GM12878 (cell line): ENCODE measurements at regions of chr10 and their contacts with region 1.

Region 1: GRCh38 chr10:69123747-69124562 is at the start of gene VPS26A:
- DNase-seq: peak; percentile 87
- ATAC-seq: peak; percentile 93
- H3K4me3 ChIP-seq: peak within 1 kb of the TSS; percentile 88
- H3K27ac ChIP-seq: peak within 1 kb of the TSS; percentile 86
- H3K4me1 ChIP-seq: peaks cover 4% of the 10 kb centered on the region; the same call in 1 of the 2 replicates
- H3K27me3 ChIP-seq: no peaks in the 10 kb centered on the region
- CTCF ChIP-seq: peak; percentile 58 to 78 (median 60); a peak in 5 of 6 replicates
- EP300 ChIP-seq: no peak
- POLR2A ChIP-seq: peak; percentile 88
- RAD21 ChIP-seq: 0 out of 2 replicates have a peak, but pooled peaks have one; percentile 3
- polyA plus RNA-seq, gene VPS26A: 21.3 to 30.9 TPM

Region 2: DNA sequence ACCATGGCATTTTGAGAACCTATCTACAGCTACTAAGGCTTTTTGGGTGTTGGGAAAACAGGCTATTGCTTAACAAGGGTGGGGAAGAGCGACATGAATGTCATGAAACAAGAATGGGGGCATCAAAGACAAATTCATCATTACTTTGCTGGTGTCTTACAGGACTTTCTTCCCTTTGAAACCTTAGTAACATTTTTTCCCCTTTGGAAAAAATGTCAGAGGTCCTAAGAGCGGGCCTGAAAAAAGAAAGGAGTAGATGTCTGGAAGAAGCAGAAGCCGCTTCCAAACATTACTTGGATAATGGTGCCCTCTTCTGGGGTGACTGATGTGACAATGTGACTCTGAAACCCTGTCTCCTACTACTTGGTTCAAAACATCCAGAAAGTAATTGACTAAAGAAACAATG is 226.6 kb before region 1 on chr10:
- CTCF ChIA-PET with region 1: no interaction called
- POLR2A ChIA-PET with region 1: no interaction called
- RAD21 ChIA-PET with region 1: no interaction called
- SMC1A ChIA-PET with region 1: no interaction called
- in situ Hi-C with region 1: no loop called
- intact Hi-C with region 1: no loop called
- DNase-seq: no peak
- ATAC-seq: no peak
- H3K4me3 ChIP-seq: no peak overlapping the region
- H3K27ac ChIP-seq: no peak overlapping the region
- H3K4me1 ChIP-seq: no peaks in the 10 kb centered on the region; the same call in 1 of the 2 replicates
- H3K27me3 ChIP-seq: no peaks in the 10 kb centered on the region; a peak in 1 of 4 replicates
- CTCF ChIP-seq: peak; percentile 18 to 51 (median 40); a peak in 4 of 6 replicates
- EP300 ChIP-seq: no peak
- POLR2A ChIP-seq: no peak
- RAD21 ChIP-seq: peak; percentile 76

Region 3: GRCh38 chr10:69222157-69223027 is 98.4 kb after region 1 on chr10:
- CTCF ChIA-PET with region 1: no interaction called
- POLR2A ChIA-PET with region 1: no interaction called
- RAD21 ChIA-PET with region 1: interaction called, 3 read pairs
- SMC1A ChIA-PET with region 1: no interaction called
- in situ Hi-C with region 1: no loop called
- intact Hi-C with region 1: loop called (anchors 10 kb)
- DNase-seq: peak; percentile 88
- ATAC-seq: peak; percentile 97
- H3K4me3 ChIP-seq: peak overlapping the region; percentile 63
- H3K27ac ChIP-seq: peak overlapping the region; percentile 80
- H3K4me1 ChIP-seq: peaks cover 25% of the 10 kb centered on the region
- H3K27me3 ChIP-seq: no peaks in the 10 kb centered on the region
- CTCF ChIP-seq: peak; percentile 71 to 82 (median 77)
- EP300 ChIP-seq: peak; percentile 83 to 86
- POLR2A ChIP-seq: peak; percentile 69
- RAD21 ChIP-seq: peak; percentile 62

Region 4: GRCh38 chr10:69327463-69328379 is 203.8 kb after region 1 on chr10:
- CTCF ChIA-PET with region 1: no interaction called
- POLR2A ChIA-PET with region 1: interaction called, 12 read pairs
- RAD21 ChIA-PET with region 1: interaction called, 4 read pairs
- SMC1A ChIA-PET with region 1: no interaction called
- in situ Hi-C with region 1: no loop called
- intact Hi-C with region 1: no loop called
- DNase-seq: no peak
- ATAC-seq: peak; percentile 96
- H3K4me3 ChIP-seq: peak overlapping the region; percentile 62
- H3K27ac ChIP-seq: peak overlapping the region; percentile 77
- H3K4me1 ChIP-seq: peaks cover 14% of the 10 kb centered on the region
- H3K27me3 ChIP-seq: no peaks in the 10 kb centered on the region
- CTCF ChIP-seq: no peak
- EP300 ChIP-seq: no peak
- POLR2A ChIP-seq: peak; percentile 73
- RAD21 ChIP-seq: no peak

Region 5: GRCh38 chr10:69348816-69349541 is 225.0 kb after region 1 on chr10:
- CTCF ChIA-PET with region 1: no interaction called
- POLR2A ChIA-PET with region 1: no interaction called
- RAD21 ChIA-PET with region 1: no interaction called
- SMC1A ChIA-PET with region 1: no interaction called
- in situ Hi-C with region 1: no loop called
- intact Hi-C with region 1: no loop called
- DNase-seq: no peak
- ATAC-seq: no peak
- H3K4me3 ChIP-seq: no peak overlapping the region
- H3K27ac ChIP-seq: no peak overlapping the region
- H3K4me1 ChIP-seq: peaks cover 18% of the 10 kb centered on the region
- H3K27me3 ChIP-seq: no peaks in the 10 kb centered on the region
- CTCF ChIP-seq: no peak
- EP300 ChIP-seq: no peak
- POLR2A ChIP-seq: no peak
- RAD21 ChIP-seq: no peak

Region 6: DNA sequence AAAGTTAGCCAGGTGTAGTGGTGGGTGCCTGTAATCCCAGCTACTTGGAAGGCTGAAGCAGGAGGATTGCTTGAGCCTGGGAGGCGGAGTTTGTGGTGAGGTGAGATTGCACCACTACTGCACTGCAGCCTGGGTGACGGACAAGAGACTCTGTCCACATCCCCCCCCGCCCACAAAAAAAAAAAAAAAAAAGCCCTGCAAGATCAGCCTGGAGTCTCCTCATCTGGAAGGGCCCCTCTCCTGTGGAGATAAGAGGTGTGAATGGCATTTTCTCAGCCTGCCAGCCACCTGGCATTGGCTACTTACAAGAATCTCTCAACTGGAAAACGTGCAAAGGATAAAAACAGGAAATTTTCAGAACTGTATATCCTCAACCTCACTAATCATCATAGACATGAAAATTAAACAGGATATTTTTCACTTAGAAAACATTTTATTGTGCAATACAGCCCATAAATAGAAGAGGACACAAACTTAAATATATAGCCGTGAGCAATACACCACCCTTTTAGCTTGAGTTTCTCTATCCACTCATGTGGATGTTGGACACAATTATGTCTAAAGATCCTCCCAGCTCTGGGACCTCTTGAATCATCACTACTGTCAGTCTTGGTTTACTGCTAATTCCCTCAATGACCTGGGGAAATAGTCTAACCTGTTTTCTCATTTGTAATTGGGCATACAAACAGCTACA is 316.0 kb after region 1 on chr10:
- CTCF ChIA-PET with region 1: no interaction called
- POLR2A ChIA-PET with region 1: no interaction called
- RAD21 ChIA-PET with region 1: no interaction called
- SMC1A ChIA-PET with region 1: no interaction called
- in situ Hi-C with region 1: no loop called
- intact Hi-C with region 1: no loop called
- DNase-seq: no peak
- ATAC-seq: no peak
- H3K4me3 ChIP-seq: no peak overlapping the region
- H3K27ac ChIP-seq: no peak overlapping the region
- H3K4me1 ChIP-seq: no peaks in the 10 kb centered on the region
- H3K27me3 ChIP-seq: no peaks in the 10 kb centered on the region; a peak in 2 of 4 replicates
- CTCF ChIP-seq: no peak
- EP300 ChIP-seq: no peak
- POLR2A ChIP-seq: no peak
- RAD21 ChIP-seq: no peak